Uterus (tissue), 4 donors: ENCODE measurements at regions of chr3 and their contacts with region 1.

Region 1: GRCh38 chr3:151282921-151283320 is 4.6 kb upstream of the P2RY14 start:
- DNase-seq: no peak
- H3K4me3 ChIP-seq: no peak overlapping the region
- H3K27ac ChIP-seq: peak overlapping the region in 1 of 2 donors; percentile 51
- H3K4me1 ChIP-seq: peaks cover 4 to 5% of the 10 kb centered on the region in 2 donors
- H3K27me3 ChIP-seq: no peaks in the 10 kb centered on the region
- CTCF ChIP-seq: peak; percentile 63 to 83 (median 66)
- POLR2A ChIP-seq: no peak

Region 2: GRCh38 chr3:151227807-151228665 is 54.9 kb before region 1 on chr3:
- intact Hi-C with region 1: loop called (anchors 10 kb)
- DNase-seq: peak; percentile 72 to 78
- H3K4me3 ChIP-seq: no peak overlapping the region
- H3K27ac ChIP-seq: peak overlapping the region in 1 of 2 donors; percentile 14
- H3K4me1 ChIP-seq: no peaks in the 10 kb centered on the region
- H3K27me3 ChIP-seq: no peaks in the 10 kb centered on the region
- CTCF ChIP-seq: peak; percentile 81 to 92 (median 88)
- POLR2A ChIP-seq: no peak

Region 3: GRCh38 chr3:151379083-151379734 is 96.3 kb after region 1 on chr3:
- intact Hi-C with region 1: no loop called
- DNase-seq: no peak
- H3K4me3 ChIP-seq: no peak overlapping the region
- H3K27ac ChIP-seq: no peak overlapping the region
- H3K4me1 ChIP-seq: no peaks in the 10 kb centered on the region
- H3K27me3 ChIP-seq: no peaks in the 10 kb centered on the region
- CTCF ChIP-seq: peak in 1 of 4 experiments; percentile 24
- POLR2A ChIP-seq: no peak